Endothelial cell of umbilical vein (primary cell): ENCODE measurements at regions of chr7 and their contacts with region 1.

Region 1: DNA sequence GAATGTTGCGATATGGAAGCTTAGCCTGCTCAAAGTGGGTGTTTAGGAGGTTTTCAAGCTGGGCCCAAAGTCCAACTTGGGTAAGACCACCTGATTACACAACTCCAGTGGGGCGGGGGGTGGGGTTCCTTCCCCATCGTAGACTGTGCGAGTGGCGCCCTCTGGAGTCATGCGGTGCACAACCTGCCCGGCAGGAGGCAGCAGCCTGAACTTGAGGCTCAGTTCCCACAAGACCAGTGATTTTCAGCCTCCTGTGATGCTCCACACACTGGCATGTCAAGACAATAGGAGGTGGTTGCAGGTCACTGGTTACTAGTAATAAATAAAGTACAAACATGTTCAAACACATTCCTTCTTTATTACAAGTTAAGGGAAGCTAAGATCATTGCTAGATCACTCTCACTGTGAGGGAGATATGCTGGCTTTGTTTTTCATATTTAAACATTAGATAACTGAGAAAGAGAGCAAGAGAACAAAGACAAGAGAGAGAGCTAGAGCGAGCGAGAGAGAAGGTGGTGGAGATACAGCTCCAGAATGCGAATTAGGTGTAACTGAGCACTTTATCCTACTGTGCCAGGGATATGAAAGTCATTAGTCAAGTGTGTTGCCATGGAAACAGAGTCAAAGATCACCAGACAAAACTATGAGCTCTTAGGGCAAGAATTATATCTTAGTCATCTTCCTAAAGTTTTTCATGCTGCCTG is 97.4 kb upstream of the BMPER start:
- DNase-seq: peak; percentile 91
- H3K4me3 ChIP-seq: no peak overlapping the region
- H3K27ac ChIP-seq: peak overlapping the region; percentile 81
- H3K4me1 ChIP-seq: peaks cover 27% of the 10 kb centered on the region
- H3K27me3 ChIP-seq: no peaks in the 10 kb centered on the region
- CTCF ChIP-seq: peak; percentile 62 to 66
- POLR2A ChIP-seq: no peak

Region 2: DNA sequence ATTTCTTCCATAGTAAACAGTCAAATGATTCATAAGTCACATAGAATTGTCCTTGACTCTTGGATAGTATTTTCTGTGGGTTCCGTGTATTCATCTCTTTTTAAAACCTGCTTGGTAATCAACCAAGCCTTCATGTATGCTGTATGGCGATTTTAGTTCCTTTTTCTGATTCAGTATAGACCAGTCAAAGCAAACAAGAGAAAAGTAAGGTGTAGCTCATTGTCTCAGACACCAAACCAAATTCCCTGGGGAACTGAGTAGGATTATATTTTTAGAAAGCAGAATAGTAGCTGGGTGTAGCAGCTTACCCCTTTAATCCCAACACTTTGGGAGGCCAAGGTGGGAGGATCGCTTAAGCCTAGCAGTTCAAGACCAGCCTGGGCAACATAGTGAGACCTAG is 438.0 kb before region 1 on chr7:
- CTCF ChIA-PET with region 1: no interaction called
- POLR2A ChIA-PET with region 1: no interaction called
- dilution Hi-C with region 1: no loop called
- intact Hi-C with region 1: no loop called
- DNase-seq: no peak
- H3K4me3 ChIP-seq: no peak overlapping the region
- H3K27ac ChIP-seq: no peak overlapping the region
- H3K4me1 ChIP-seq: no peaks in the 10 kb centered on the region
- H3K27me3 ChIP-seq: no peaks in the 10 kb centered on the region
- CTCF ChIP-seq: no peak
- POLR2A ChIP-seq: no peak

Region 3: DNA sequence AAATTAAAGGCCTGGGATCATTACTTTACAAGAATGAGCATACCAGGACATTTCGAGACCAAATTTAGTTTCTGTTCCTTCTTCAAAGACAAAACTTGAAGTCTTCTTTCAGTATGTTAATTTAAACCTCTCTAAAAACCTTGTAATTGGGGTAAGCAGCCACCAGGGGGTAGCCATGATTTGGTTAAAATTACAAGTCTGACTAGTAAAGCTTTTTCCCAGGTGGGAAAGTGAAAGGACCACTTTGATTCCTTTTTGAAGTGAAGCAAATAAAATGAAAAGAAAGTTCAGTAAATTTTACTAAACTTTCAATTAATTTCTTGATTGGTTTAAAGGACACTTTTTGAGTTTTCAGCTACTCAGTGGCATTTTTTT is 384.3 kb before region 1 on chr7:
- CTCF ChIA-PET with region 1: no interaction called
- POLR2A ChIA-PET with region 1: no interaction called
- dilution Hi-C with region 1: no loop called
- intact Hi-C with region 1: loop called (anchors 10 kb)
- DNase-seq: peak; percentile 15
- H3K4me3 ChIP-seq: no peak overlapping the region
- H3K27ac ChIP-seq: no peak overlapping the region
- H3K4me1 ChIP-seq: no peaks in the 10 kb centered on the region
- H3K27me3 ChIP-seq: no peaks in the 10 kb centered on the region
- CTCF ChIP-seq: peak; percentile 16 to 27
- POLR2A ChIP-seq: no peak